Transverse colon (tissue), 4 donors: ENCODE measurements at regions of chr6 and their contacts with region 1.

Region 1: GRCh38 chr6:53504512-53504911 is 40.4 kb downstream of the GCLC start:
- DNase-seq: no peak
- H3K4me3 ChIP-seq: no peak overlapping the region
- H3K27ac ChIP-seq: no peak overlapping the region
- H3K4me1 ChIP-seq: no peaks in the 10 kb centered on the region
- H3K27me3 ChIP-seq: no peaks in the 10 kb centered on the region
- CTCF ChIP-seq: no peak
- EP300 ChIP-seq: no peak
- POLR2A ChIP-seq: no peak

Region 2: GRCh38 chr6:53524455-53524815 is 19.9 kb after region 1 on chr6:
- in situ Hi-C with region 1: no loop called
- intact Hi-C with region 1: no loop called
- DNase-seq: no peak
- H3K4me3 ChIP-seq: no peak overlapping the region
- H3K27ac ChIP-seq: peak overlapping the region; percentile 35 to 63 (median 54)
- H3K4me1 ChIP-seq: peaks cover 6 to 52% (median 35%) of the 10 kb centered on the region in 4 donors
- H3K27me3 ChIP-seq: no peaks in the 10 kb centered on the region
- CTCF ChIP-seq: no peak
- EP300 ChIP-seq: no peak
- POLR2A ChIP-seq: no peak

Region 3: DNA sequence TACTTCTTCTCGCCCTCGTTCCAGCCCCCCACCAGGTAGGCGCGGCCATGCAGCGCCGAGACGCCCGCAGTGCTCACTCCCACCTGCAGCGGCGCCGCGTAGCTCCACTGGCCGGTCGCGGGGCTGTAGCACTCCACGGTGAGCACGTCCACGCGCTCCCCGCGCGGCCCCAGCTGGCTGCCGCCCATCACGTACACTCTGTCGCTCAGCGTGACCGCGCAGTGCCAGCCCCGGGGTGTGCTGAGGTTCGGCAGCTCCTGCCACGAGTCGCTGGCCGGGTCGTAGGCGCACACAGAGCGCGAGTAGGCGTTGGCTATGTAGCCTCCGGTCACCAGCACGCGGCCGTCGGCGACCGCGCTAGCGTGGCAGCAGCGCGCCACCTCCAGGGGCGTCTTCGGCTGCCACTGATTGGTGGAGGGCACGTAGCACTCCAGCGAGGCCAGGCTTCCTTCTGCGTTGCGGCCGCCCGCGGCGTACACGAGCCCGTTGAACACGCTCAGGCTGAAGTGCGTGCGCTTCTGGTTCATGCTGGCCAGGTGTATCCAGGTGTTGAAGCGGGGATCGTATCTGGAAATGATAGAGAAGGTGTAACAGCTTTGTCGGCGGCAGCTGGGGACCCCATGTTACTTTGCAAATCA is 147.4 kb after region 1 on chr6:
- in situ Hi-C with region 1: no loop called
- intact Hi-C with region 1: loop called (anchors 10 kb)
- DNase-seq: peak; percentile 88
- H3K4me3 ChIP-seq: peak overlapping the region; percentile 10 to 70 (median 46)
- H3K27ac ChIP-seq: peak overlapping the region; percentile 74 to 90 (median 82)
- H3K4me1 ChIP-seq: peaks cover 0 to 13% (median 5%) of the 10 kb centered on the region in 4 donors
- H3K27me3 ChIP-seq: no peaks in the 10 kb centered on the region
- CTCF ChIP-seq: peak in 4 of 5 experiments; percentile 37 to 73 (median 39)
- EP300 ChIP-seq: no peak
- POLR2A ChIP-seq: peak; percentile 65

Region 4: DNA sequence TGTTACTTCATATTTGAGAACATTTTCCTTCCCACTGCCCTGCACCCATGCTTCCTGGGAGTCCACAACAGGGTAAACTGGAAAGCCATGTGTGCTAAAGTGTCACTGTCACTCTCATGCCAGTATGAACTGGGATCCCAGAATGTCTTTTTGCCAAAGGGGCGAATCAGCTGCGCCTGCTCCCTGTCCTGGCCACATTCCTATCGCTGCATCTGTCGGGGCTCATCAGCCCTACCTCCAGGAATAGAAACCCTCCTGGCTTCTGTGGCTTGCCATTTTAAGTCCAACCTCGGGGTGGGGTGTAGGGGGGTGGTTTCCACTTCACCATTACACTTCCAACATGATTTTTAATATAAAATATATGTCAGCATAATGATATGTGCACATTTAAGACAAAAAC is 160.1 kb after region 1 on chr6:
- in situ Hi-C with region 1: loop called in 1 of 4 experiments (anchors 10 kb)
- intact Hi-C with region 1: loop called (anchors 10 kb)
- DNase-seq: no peak
- H3K4me3 ChIP-seq: no peak overlapping the region
- H3K27ac ChIP-seq: no peak overlapping the region
- H3K4me1 ChIP-seq: no peaks in the 10 kb centered on the region
- H3K27me3 ChIP-seq: no peaks in the 10 kb centered on the region
- CTCF ChIP-seq: no peak
- EP300 ChIP-seq: no peak
- POLR2A ChIP-seq: no peak

Region 5: DNA sequence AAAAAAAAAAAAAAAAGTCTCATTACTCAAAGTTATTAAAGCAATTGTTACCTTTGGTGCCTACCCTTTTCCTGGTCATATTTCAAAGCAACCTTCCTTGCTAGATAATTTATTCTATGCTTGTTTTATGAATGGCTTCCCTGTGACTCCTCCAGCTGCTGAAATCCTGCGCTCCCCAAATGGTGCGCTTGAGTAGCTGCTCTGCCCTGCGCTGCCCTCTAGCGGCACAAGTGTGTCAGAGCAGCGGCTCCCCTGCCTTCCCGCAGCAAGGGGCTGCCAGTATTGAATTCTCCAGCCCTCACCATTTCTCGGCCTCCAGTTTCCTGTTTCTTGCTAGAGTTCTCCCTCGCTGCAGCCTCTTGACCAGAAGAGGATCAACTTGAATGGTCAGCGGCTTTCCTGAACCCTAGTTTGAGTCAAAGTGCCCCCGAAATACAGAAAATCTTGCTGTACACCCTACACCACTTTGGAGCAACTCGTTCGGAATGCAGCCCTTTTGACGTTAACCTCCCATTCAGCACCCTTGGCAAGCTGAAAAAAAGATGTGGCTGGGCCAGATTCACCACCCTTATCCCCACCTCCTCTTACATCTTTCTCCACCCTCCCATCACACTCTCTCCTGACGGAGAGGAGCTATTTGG is 221.4 kb after region 1 on chr6:
- in situ Hi-C with region 1: loop called (anchors 5 to 10 kb)
- intact Hi-C with region 1: no loop called
- DNase-seq: peak; percentile 82
- H3K4me3 ChIP-seq: no peak overlapping the region
- H3K27ac ChIP-seq: no peak overlapping the region
- H3K4me1 ChIP-seq: peaks cover 0 to 13% (median 0%) of the 10 kb centered on the region in 4 donors
- H3K27me3 ChIP-seq: no peaks in the 10 kb centered on the region
- CTCF ChIP-seq: peak; percentile 90 to 97 (median 94)
- EP300 ChIP-seq: no peak
- POLR2A ChIP-seq: no peak